ENCODE measurements at regions of chr17 and their contacts with region 1.

Region 1: DNA sequence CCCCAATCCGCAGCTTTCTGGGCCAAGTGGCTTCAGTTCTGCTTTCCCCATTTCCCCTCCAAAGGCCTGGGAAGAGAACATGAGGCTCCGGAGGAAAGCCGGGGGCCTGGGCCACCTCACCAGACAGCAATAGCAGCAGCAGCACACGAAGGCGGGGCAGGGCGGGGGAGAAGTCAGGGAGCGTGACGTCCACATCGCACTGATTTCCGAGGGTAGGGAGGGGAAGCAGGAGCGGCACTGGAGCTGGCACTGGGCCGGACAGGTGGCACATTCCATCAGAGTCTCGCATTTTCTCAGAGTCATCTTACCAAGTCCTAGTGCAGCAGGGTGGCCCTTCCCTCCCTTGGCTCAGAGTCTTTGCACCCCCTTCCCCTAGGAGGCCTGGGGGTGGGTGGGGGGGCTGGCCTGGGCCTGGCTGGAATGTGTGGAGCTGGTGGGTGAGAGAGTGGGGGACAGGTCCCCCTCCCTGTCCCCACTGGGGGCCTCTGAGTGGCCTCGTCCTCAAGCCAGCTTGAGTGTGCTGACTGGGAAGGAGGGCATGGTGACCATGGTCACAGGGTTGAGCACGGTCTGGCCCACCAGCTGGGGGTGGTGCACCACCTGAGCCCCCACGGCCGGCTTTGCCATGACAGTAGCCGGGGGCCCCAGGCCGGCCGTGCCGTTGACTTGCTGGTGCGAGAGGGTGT is 14.3 kb downstream of the MNT start:
- DNase-seq: no peak
- H3K4me3 ChIP-seq: no peak overlapping the region
- H3K4me3 Mint-ChIP-seq: no peak overlapping the region
- H3K27ac Mint-ChIP-seq: no peak overlapping the region
- H3K4me1 ChIP-seq: no peaks in the 10 kb centered on the region
- H3K4me1 Mint-ChIP-seq: no peaks in the 10 kb centered on the region
- H3K27me3 ChIP-seq: no peaks in the 10 kb centered on the region
- H3K27me3 Mint-ChIP-seq: no peaks in the 10 kb centered on the region
- CTCF ChIP-seq: no peak

Region 2: GRCh38 chr17:2369551-2370210 is 16.9 kb before region 1 on chr17:
- CTCF ChIA-PET with region 1: interaction called, 22 read pairs
- POLR2A ChIA-PET with region 1: no interaction called
- intact Hi-C with region 1: no loop called
- DNase-seq: peak in 1 of 2 experiments; percentile 40
- H3K4me3 ChIP-seq: no peak overlapping the region
- H3K4me3 Mint-ChIP-seq: no peak overlapping the region
- H3K27ac Mint-ChIP-seq: no peak overlapping the region
- H3K4me1 ChIP-seq: no peaks in the 10 kb centered on the region
- H3K4me1 Mint-ChIP-seq: no peaks in the 10 kb centered on the region
- H3K27me3 ChIP-seq: no peaks in the 10 kb centered on the region
- H3K27me3 Mint-ChIP-seq: no peaks in the 10 kb centered on the region
- CTCF ChIP-seq: no peak

Region 3: DNA sequence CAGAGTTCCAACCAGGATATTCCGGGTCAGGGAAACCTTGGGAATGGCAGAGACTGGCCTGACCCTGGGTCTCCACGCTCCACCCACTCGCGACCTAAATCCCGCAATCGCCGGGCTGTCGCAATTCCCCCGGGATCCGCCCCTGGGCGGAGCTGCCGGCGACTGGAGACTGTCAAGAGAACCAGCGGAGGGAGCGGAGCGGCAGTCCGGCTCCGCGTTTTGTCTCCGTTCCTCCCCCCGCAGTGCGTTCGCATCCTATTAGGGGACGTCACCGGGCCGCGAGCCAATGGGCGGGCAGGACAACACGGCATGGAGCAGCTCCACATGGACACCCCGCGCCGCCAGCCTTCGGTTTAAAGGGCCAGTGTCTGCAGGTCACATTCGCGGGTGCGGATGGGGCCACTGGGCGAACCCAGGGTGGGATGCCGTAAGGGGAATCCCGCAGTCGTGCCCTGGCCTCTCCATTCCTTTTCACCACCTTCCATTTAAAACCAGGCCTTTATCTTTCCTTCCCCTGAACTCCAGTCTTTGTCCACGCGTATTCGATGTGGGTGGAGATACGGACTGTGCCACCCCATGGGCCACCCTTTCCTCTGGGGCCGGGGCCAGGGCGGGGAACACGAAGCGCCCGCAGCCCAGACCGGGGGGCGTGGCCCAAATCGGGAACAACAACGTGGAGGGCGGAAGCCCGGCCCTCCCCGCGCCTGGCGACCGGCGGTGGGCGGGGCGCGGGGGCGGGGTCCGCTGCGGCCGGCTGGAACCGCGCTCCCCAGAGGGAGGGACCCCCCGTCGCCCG is 15.1 kb after region 1 on chr17:
- CTCF ChIA-PET with region 1: interaction called, 20 read pairs
- POLR2A ChIA-PET with region 1: interaction called, 14 read pairs
- intact Hi-C with region 1: loop called (anchors 1 kb)
- DNase-seq: peak; percentile 100
- H3K4me3 ChIP-seq: peak overlapping the region; percentile 97
- H3K4me3 Mint-ChIP-seq: peak overlapping the region; percentile 86
- H3K27ac Mint-ChIP-seq: peak overlapping the region; percentile 93
- H3K4me1 ChIP-seq: peaks cover 24% of the 10 kb centered on the region
- H3K4me1 Mint-ChIP-seq: peaks cover 27% of the 10 kb centered on the region
- H3K27me3 ChIP-seq: no peaks in the 10 kb centered on the region
- H3K27me3 Mint-ChIP-seq: no peaks in the 10 kb centered on the region
- CTCF ChIP-seq: no peak

Region 4: DNA sequence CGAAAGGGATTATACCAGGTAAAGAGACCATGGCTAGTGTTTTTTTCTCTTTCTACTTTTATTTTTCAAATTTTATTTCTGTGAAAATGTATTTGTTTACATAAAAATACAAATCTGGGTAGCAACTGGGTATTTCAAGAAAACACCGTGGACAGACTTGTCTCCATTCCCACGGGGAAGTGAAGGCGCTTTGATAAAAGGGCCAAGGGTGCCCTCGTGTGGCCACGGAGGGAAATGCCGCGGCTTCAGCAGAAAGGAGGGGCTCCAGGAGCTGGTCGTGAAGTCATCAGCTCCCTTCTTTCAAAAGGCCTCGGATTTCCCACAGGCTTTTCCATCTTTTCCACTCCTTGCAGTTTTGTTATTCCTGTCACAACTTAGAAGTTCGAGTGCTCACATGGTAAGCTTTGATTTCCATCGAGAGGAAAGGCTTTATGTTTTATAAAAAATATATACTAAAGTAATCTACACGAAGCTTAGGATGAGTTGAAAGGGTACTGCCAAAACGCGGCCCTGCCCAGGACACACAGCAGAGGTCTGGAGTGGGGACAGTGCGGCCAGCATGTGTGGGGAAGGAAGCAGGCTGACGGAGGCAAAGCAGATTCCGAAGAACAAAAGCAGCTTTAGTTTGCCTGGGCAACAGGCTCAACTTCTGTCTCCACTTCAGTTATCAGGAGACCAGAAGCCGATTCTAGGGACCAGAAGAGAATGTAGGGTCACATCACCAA is 29.6 kb after region 1 on chr17:
- CTCF ChIA-PET with region 1: interaction called, 213 read pairs
- POLR2A ChIA-PET with region 1: interaction called, 18 read pairs
- intact Hi-C with region 1: loop called (anchors 1 kb)
- DNase-seq: peak; percentile 85 to 92
- H3K4me3 ChIP-seq: no peak overlapping the region
- H3K4me3 Mint-ChIP-seq: no peak overlapping the region
- H3K27ac Mint-ChIP-seq: no peak overlapping the region
- H3K4me1 ChIP-seq: no peaks in the 10 kb centered on the region
- H3K4me1 Mint-ChIP-seq: no peaks in the 10 kb centered on the region
- H3K27me3 ChIP-seq: no peaks in the 10 kb centered on the region
- H3K27me3 Mint-ChIP-seq: no peaks in the 10 kb centered on the region
- CTCF ChIP-seq: peak; percentile 97 to 98

Measured in Caco-2 (cell line).